Caco-2 (cell line): ENCODE measurements at regions of chr4 and their contacts with region 1.

Region 1: DNA sequence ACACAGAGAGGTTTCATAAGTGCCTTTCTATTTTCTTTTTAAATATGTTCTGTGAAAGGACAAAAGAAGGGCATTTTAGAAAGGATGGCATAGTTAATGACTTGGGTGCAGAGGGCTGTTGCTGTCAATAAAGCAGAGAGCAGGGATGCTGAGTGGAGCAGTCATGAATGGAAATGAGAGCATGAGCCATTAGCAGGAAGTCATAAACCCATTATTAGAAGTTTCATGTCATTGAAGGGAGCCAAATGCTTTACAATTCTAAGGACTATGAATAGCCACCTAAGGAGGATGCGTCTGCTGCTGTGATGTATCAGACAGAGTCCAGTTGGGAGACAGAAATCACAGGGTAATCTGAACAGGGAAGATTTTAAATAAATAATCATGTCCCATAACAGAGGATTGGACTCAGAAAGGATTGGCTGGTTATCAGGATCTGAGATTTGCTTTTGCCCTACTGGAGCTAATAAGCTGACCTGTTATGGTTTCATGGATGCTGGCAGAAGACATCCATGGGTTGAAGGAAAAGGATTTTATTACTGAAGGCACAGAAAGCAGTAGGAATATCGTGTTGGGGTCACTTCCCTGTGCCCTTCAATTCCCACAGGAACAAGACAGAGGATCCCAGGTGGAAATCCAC is 47.5 kb upstream of the WDR19 start:
- DNase-seq: peak in 1 of 2 experiments; percentile 3
- H3K4me3 ChIP-seq: peak overlapping the region; percentile 11; the same call in 1 of the 2 replicates
- H3K4me3 Mint-ChIP-seq: peak overlapping the region; percentile 1
- H3K27ac Mint-ChIP-seq: peak overlapping the region; percentile 7
- H3K4me1 ChIP-seq: peaks cover 8% of the 10 kb centered on the region; the same call in 1 of the 2 replicates
- H3K4me1 Mint-ChIP-seq: no peaks in the 10 kb centered on the region
- H3K27me3 ChIP-seq: no peaks in the 10 kb centered on the region
- H3K27me3 Mint-ChIP-seq: no peaks in the 10 kb centered on the region
- CTCF ChIP-seq: no peak

Region 2: GRCh38 chr4:39044364-39044955 is 90.3 kb before region 1 on chr4:
- CTCF ChIA-PET with region 1: interaction called, 7 read pairs
- POLR2A ChIA-PET with region 1: no interaction called
- intact Hi-C with region 1: loop called (anchors 1 kb)
- DNase-seq: peak; percentile 96 to 98
- H3K4me3 ChIP-seq: peak overlapping the region; percentile 42
- H3K4me3 Mint-ChIP-seq: peak overlapping the region; percentile 89
- H3K27ac Mint-ChIP-seq: peak overlapping the region; percentile 92
- H3K4me1 ChIP-seq: peaks cover 28% of the 10 kb centered on the region
- H3K4me1 Mint-ChIP-seq: peaks cover 27% of the 10 kb centered on the region
- H3K27me3 ChIP-seq: no peaks in the 10 kb centered on the region
- H3K27me3 Mint-ChIP-seq: no peaks in the 10 kb centered on the region
- CTCF ChIP-seq: no peak

Region 3: GRCh38 chr4:39574946-39575345 is 440.1 kb after region 1 on chr4:
- CTCF ChIA-PET with region 1: no interaction called
- POLR2A ChIA-PET with region 1: no interaction called
- intact Hi-C with region 1: no loop called
- DNase-seq: no peak
- H3K4me3 ChIP-seq: no peak overlapping the region
- H3K4me3 Mint-ChIP-seq: no peak overlapping the region
- H3K27ac Mint-ChIP-seq: no peak overlapping the region
- H3K4me1 ChIP-seq: 0 out of 2 replicates have a peak, but pooled peaks cover 3% of the 10 kb centered on the region
- H3K4me1 Mint-ChIP-seq: peaks cover 7% of the 10 kb centered on the region
- H3K27me3 ChIP-seq: no peaks in the 10 kb centered on the region
- H3K27me3 Mint-ChIP-seq: no peaks in the 10 kb centered on the region
- CTCF ChIP-seq: no peak